HepG2 (cell line): ENCODE measurements at regions of chr9 and their contacts with region 1.

Region 1: GRCh38 chr9:35732122-35732799 is at the starts of genes CREB3 and TLN1:
- DNase-seq: peak; percentile 96
- ATAC-seq: peak; percentile 90
- H3K4me3 ChIP-seq: peak within 1 kb of the TSS; percentile 92 to 98 (median 92)
- H3K27ac ChIP-seq: peak within 1 kb of the TSS; percentile 95
- H3K4me1 ChIP-seq: peaks cover 53% of the 10 kb centered on the region
- H3K27me3 ChIP-seq: no peaks in the 10 kb centered on the region; a peak in 1 of 5 replicates
- CTCF ChIP-seq: peak; percentile 83
- EP300 ChIP-seq: peak in 1 of 2 experiments; percentile 49; a peak in 2 of 4 replicates
- POLR2A ChIP-seq: peak; percentile 72 to 76
- RAD21 ChIP-seq: peak; percentile 39; the same call in 1 of the 2 replicates
- total RNA-seq, gene CREB3: 32.2 and 34.2 TPM in 2 replicates
- total RNA-seq, gene TLN1: 51.8 and 53.7 TPM in 2 replicates

Region 2: GRCh38 chr9:35603987-35604577 is 128.2 kb before region 1 on chr9:
- CTCF ChIA-PET with region 1: no interaction called
- POLR2A ChIA-PET with region 1: interaction called, 5 read pairs
- in situ Hi-C with region 1: no loop called
- intact Hi-C with region 1: loop called (anchors 1 kb)
- DNase-seq: peak; percentile 98
- ATAC-seq: peak; percentile 91
- H3K4me3 ChIP-seq: peak overlapping the region; percentile 75 to 92 (median 90)
- H3K27ac ChIP-seq: peak overlapping the region; percentile 81
- H3K4me1 ChIP-seq: peaks cover 41% of the 10 kb centered on the region
- H3K27me3 ChIP-seq: no peaks in the 10 kb centered on the region; a peak in 2 of 5 replicates
- CTCF ChIP-seq: peak; percentile 97
- EP300 ChIP-seq: no peak
- POLR2A ChIP-seq: peak; percentile 69 to 88
- RAD21 ChIP-seq: peak; percentile 54; the same call in 1 of the 2 replicates

Region 3: GRCh38 chr9:35657546-35658136 is 74.6 kb before region 1 on chr9 and contains the start of gene RMRP:
- CTCF ChIA-PET with region 1: no interaction called
- POLR2A ChIA-PET with region 1: interaction called, 51 read pairs
- in situ Hi-C with region 1: no loop called
- intact Hi-C with region 1: loop called (anchors 1 kb)
- DNase-seq: peak; percentile 99
- ATAC-seq: peak; percentile 90
- H3K4me3 ChIP-seq: peak within 1 kb of the TSS; percentile 66 to 89 (median 85)
- H3K27ac ChIP-seq: peak within 1 kb of the TSS; percentile 100
- H3K4me1 ChIP-seq: peaks cover 71% of the 10 kb centered on the region
- H3K27me3 ChIP-seq: no peaks in the 10 kb centered on the region; a peak in 2 of 5 replicates
- CTCF ChIP-seq: peak; percentile 65
- EP300 ChIP-seq: peak in 1 of 2 experiments; percentile 57; a peak in 3 of 4 replicates
- POLR2A ChIP-seq: peak in 1 of 2 experiments; percentile 74; a peak in 1 of 4 replicates
- RAD21 ChIP-seq: peak; percentile 14; the same call in 1 of the 2 replicates
- total RNA-seq, gene RMRP: 1,047 and 4,025 TPM in 2 replicates

Region 4: GRCh38 chr9:35690431-35691333 is 41.6 kb before region 1 on chr9:
- CTCF ChIA-PET with region 1: no interaction called
- POLR2A ChIA-PET with region 1: interaction called, 20 read pairs
- in situ Hi-C with region 1: no loop called
- intact Hi-C with region 1: no loop called
- DNase-seq: no peak
- ATAC-seq: peak; percentile 53
- H3K4me3 ChIP-seq: peak overlapping the region; percentile 75 to 84 (median 81)
- H3K27ac ChIP-seq: peak overlapping the region; percentile 26
- H3K4me1 ChIP-seq: peaks cover 65% of the 10 kb centered on the region
- H3K27me3 ChIP-seq: no peaks in the 10 kb centered on the region
- CTCF ChIP-seq: no peak
- EP300 ChIP-seq: no peak
- POLR2A ChIP-seq: peak in 1 of 2 experiments; percentile 42; a peak in 1 of 4 replicates
- RAD21 ChIP-seq: no peak

Region 5: DNA sequence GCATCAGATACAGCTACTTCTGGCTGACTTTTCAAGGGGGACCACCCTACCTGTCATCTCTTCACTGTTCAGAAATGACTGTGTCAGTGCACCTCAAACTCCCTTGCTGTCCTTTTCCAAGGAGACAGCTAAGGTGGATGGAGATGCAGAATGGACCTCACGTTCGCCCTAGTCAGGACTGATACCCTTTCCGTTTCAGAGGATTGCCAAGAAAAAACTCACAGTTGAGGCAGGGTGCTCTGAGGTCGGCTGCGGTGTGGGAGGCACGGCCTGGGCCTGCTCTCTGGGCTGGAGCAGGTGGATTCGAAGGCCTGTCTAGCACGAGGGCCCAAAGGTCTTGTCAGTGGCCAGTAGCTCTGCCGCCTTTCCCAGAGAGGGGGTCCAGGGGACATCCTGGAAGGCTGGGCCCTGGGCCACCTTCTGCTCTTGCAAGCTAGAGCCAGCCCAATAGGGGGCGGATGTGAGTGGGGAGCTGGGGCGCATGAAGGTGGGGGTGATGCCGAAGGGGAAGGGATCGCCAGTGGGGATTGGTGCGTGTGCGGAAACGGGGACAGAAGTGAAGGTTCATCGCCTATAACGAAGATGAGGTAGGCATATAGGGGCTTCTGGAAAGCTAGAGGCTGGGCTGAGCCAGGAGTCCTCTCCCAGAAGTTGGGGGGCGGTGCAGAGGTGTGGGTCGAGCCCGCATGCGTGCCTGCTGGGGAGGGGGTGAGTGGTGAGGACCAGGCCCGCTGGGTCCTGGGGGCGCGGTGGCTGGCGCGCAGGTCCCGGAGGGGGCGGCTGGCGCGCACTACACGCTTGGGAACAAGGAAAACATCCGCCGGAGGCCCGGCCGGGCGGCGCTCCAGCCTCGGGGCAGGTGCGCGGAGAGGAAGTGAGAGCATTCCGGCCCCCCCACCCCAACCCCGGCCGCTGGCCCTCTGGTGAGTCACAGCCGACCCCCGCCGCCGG is 24.3 kb after region 1 on chr9:
- CTCF ChIA-PET with region 1: no interaction called
- POLR2A ChIA-PET with region 1: interaction called, 21 read pairs
- in situ Hi-C with region 1: no loop called
- intact Hi-C with region 1: loop called (anchors 2 kb)
- DNase-seq: peak; percentile 62
- ATAC-seq: peak; percentile 87
- H3K4me3 ChIP-seq: peak overlapping the region; percentile 82 to 90 (median 89)
- H3K27ac ChIP-seq: peak overlapping the region; percentile 95
- H3K4me1 ChIP-seq: peaks cover 33% of the 10 kb centered on the region
- H3K27me3 ChIP-seq: no peaks in the 10 kb centered on the region; a peak in 1 of 5 replicates
- CTCF ChIP-seq: peak; percentile 87
- EP300 ChIP-seq: no peak
- POLR2A ChIP-seq: peak in 1 of 2 experiments; percentile 56; a peak in 3 of 4 replicates
- RAD21 ChIP-seq: 0 out of 2 replicates have a peak, but pooled peaks have one; percentile 18

Region 6: GRCh38 chr9:35814841-35815543 is 82.7 kb after region 1 on chr9 and contains the start of gene HINT2:
- CTCF ChIA-PET with region 1: no interaction called
- POLR2A ChIA-PET with region 1: interaction called, 16 read pairs
- in situ Hi-C with region 1: no loop called
- intact Hi-C with region 1: no loop called
- DNase-seq: peak; percentile 99
- ATAC-seq: peak; percentile 90
- H3K4me3 ChIP-seq: peak within 1 kb of the TSS; percentile 68 to 86 (median 86)
- H3K27ac ChIP-seq: peak within 1 kb of the TSS; percentile 99
- H3K4me1 ChIP-seq: peaks cover 44% of the 10 kb centered on the region
- H3K27me3 ChIP-seq: no peaks in the 10 kb centered on the region
- CTCF ChIP-seq: no peak
- EP300 ChIP-seq: no peak
- POLR2A ChIP-seq: peak; percentile 79 to 82
- RAD21 ChIP-seq: no peak
- total RNA-seq, gene HINT2: 51.4 and 56.2 TPM in 2 replicates